K562 (cell line): ENCODE measurements at regions of chr6 and their contacts with region 1.

Region 1: DNA sequence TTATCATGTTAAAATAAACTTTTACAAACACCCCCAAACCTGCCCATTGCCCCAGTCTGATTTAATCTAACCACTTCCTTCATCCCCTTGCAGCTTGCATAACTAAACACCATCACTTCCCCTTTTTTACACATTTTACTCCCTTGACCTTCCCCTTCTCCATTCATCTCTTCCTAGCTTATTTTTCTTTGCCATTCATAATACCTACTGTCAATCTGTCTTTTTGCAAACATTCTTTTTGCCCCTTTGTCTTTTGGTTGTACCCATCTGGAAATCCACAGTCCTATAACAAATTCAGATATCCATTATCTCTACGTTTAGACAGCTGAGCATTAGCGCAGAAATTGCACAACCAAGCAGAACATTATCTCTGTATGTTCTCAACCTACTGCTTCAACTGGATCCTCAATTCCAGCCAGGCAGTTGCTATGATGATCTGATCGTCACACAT is 51.2 kb downstream of the C6orf52 start:
- DNase-seq: peak in 1 of 4 experiments; percentile 41
- ATAC-seq: peak; percentile 69
- H3K4me3 ChIP-seq: no peak overlapping the region
- H3K27ac ChIP-seq: peak overlapping the region; percentile 28; the same call in 1 of the 3 replicates
- H3K4me1 ChIP-seq: peaks cover 4 to 22% of the 10 kb centered on the region in 2 experiments; a peak in 4 of 5 replicates
- H3K27me3 ChIP-seq: no peaks in the 10 kb centered on the region; a peak in 2 of 5 replicates
- CTCF ChIP-seq: no peak
- EP300 ChIP-seq: peak; percentile 66
- POLR2A ChIP-seq: no peak
- RAD21 ChIP-seq: peak in 1 of 2 experiments; percentile 20; a peak in 1 of 4 replicates

Region 2: DNA sequence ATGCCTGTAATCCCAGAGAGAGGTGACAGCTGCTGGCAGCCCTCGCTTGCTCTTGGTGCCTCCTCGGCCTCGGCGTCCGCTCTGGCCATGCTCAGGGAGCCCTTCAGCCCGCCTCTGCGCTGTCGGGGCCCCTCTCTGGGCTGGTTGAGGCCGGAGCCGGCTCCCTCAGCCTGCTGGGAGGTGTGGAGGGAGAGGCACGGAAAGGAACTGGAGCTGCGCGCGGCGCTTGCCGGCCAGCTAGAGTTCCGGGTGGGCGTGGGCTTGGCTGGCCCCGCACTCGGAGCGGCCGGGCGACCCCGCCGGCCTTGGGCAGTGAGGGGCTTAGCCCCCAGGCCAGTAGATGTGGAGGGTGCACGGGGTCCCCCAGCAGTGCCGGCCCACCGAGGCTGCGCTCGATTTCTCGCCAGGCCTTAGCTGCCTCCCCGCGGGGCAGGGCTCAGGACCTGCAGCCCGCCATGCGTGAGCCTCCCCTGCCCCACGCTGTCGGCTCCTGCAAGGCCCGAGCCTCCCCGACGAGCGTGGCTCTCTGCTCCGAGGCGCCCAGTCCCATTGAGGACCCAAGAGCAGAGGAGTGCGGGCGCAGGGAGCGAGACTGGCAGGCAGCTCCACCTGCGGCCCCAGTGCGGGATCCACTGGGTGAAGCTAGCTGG is 16.6 kb after region 1 on chr6:
- CTCF ChIA-PET with region 1: no interaction called
- POLR2A ChIA-PET with region 1: interaction called, 11 read pairs
- in situ Hi-C with region 1: no loop called
- intact Hi-C with region 1: no loop called
- DNase-seq: peak in 1 of 4 experiments; percentile 40
- ATAC-seq: peak; percentile 75
- H3K4me3 ChIP-seq: peak overlapping the region; percentile 39
- H3K27ac ChIP-seq: peak overlapping the region; percentile 17; the same call in 1 of the 3 replicates
- H3K4me1 ChIP-seq: peaks cover 8% of the 10 kb centered on the region in 2 experiments
- H3K27me3 ChIP-seq: peaks cover 15 to 22% of the 10 kb centered on the region in 2 experiments
- CTCF ChIP-seq: no peak
- EP300 ChIP-seq: no peak
- POLR2A ChIP-seq: no peak
- RAD21 ChIP-seq: no peak